ENCODE measurements at regions of chr12 and their contacts with region 1.

Region 1: GRCh38 chr12:71125515-71125914 is 32.3 kb downstream of the TSPAN8 start:
- DNase-seq: peak; percentile 11
- ATAC-seq: peak; percentile 59
- H3K4me3 ChIP-seq: no peak overlapping the region
- H3K27ac ChIP-seq: no peak overlapping the region
- H3K4me1 ChIP-seq: no peaks in the 10 kb centered on the region
- H3K27me3 ChIP-seq: no peaks in the 10 kb centered on the region
- CTCF ChIP-seq: 0 out of 2 replicates have a peak, but pooled peaks have one; percentile 27

Region 2: GRCh38 chr12:71085575-71085974 is 39.9 kb before region 1 on chr12:
- CTCF ChIA-PET with region 1: no interaction called
- POLR2A ChIA-PET with region 1: no interaction called
- intact Hi-C with region 1: no loop called
- DNase-seq: peak; percentile 70
- ATAC-seq: peak; percentile 73
- H3K4me3 ChIP-seq: no peak overlapping the region
- H3K27ac ChIP-seq: peak overlapping the region; percentile 58
- H3K4me1 ChIP-seq: peaks cover 15% of the 10 kb centered on the region
- H3K27me3 ChIP-seq: no peaks in the 10 kb centered on the region
- CTCF ChIP-seq: no peak

Region 3: GRCh38 chr12:71371122-71371521 is 245.6 kb after region 1 on chr12:
- CTCF ChIA-PET with region 1: no interaction called
- POLR2A ChIA-PET with region 1: no interaction called
- intact Hi-C with region 1: loop called (anchors 2 kb)
- DNase-seq: peak; percentile 47
- ATAC-seq: peak; percentile 74
- H3K4me3 ChIP-seq: no peak overlapping the region
- H3K27ac ChIP-seq: no peak overlapping the region
- H3K4me1 ChIP-seq: no peaks in the 10 kb centered on the region
- H3K27me3 ChIP-seq: no peaks in the 10 kb centered on the region
- CTCF ChIP-seq: peak; percentile 62

Region 4: DNA sequence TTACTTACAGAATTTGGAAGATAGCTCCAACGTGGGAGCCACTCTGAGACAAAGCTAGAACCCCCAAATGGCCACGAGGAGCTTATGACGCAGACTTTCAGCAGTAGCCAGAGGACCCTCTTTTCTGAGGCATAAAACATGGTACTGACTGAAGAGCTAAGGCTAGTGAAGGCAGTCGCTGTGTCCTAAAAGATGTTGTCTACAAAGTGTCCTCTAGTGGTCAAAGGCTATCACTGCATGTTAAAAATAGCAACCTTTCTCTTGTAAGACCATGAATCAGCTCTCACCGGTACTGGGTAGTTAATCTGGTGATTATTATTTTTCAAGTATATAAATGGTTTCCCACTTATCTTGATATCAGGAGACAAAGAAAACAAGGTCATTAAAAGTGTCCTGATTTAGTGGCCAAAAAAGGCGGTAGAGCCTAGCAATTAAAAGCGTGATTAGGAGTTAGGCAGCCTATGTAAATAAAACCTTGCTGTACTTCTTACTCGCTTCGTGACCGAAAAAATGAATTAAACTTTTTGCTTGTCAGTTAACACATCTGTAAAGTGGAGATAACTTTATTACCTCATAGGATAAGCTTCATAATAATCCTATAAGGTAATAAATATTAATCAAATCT is 267.1 kb after region 1 on chr12:
- CTCF ChIA-PET with region 1: interaction called, 4 read pairs
- POLR2A ChIA-PET with region 1: no interaction called
- intact Hi-C with region 1: loop called (anchors 2 kb)
- DNase-seq: peak; percentile 84
- ATAC-seq: peak; percentile 84
- H3K4me3 ChIP-seq: no peak overlapping the region
- H3K27ac ChIP-seq: no peak overlapping the region
- H3K4me1 ChIP-seq: peaks cover 14% of the 10 kb centered on the region
- H3K27me3 ChIP-seq: no peaks in the 10 kb centered on the region
- CTCF ChIP-seq: peak; percentile 87

Region 5: GRCh38 chr12:71551529-71551928 is 426.0 kb after region 1 on chr12:
- CTCF ChIA-PET with region 1: no interaction called
- POLR2A ChIA-PET with region 1: no interaction called
- intact Hi-C with region 1: loop called (anchors 2 kb)
- DNase-seq: peak; percentile 44
- ATAC-seq: peak; percentile 45
- H3K4me3 ChIP-seq: no peak overlapping the region
- H3K27ac ChIP-seq: no peak overlapping the region
- H3K4me1 ChIP-seq: no peaks in the 10 kb centered on the region
- H3K27me3 ChIP-seq: no peaks in the 10 kb centered on the region
- CTCF ChIP-seq: peak; percentile 74

Measured in PC-3 (cell line).